Ovary (tissue), 10 donors: ENCODE measurements at regions of chr4 and their contacts with region 1.

Region 1: GRCh38 chr4:184168406-184169019 is 49.2 kb downstream of the ENPP6 start:
- DNase-seq: peak; percentile 80 to 92 (median 89)
- H3K4me3 ChIP-seq: no peak overlapping the region
- H3K27ac ChIP-seq: peak overlapping the region; percentile 77 to 88
- H3K4me1 ChIP-seq: peaks cover 2% of the 10 kb centered on the region
- H3K27me3 ChIP-seq: no peaks in the 10 kb centered on the region
- CTCF ChIP-seq: peak; percentile 93 to 99 (median 95)
- EP300 ChIP-seq: no peak
- POLR2A ChIP-seq: peak; percentile 13

Region 2: DNA sequence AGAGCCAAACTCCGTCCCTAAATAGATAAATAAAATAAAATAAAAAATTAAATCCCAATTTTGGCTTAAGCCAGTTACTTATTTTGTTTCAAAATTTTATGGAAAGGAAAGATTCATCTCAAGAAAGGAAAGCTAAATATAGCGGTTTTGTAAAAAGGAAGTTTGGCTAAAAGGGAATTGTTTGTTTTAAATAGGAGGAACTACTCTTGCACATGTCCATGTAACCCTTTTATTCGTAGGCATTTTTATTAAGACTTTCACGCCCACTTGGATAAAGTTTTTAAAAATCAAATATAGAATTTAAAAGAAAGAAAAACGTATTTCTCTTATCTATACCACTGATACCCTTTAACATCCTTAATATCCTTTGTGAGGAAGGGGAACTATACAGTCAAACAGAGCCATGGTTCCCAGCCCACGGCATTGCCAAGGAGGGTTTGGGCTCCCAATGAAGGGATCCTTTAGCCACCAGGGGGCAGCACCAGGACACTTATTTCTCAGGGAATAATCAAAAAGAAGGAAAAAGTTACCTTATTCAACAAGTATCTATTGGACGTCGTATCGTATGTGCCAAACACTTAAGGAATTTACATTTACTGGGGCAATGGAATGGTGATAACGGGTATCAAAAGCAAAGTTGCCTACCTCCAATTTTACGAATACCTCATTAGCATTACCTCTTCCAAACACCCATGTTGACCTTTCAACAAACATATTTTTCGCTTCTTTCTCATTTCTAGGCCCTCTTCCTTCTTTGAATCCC is 696.4 kb before region 1 on chr4:
- intact Hi-C with region 1: loop called in 1 of 4 experiments (anchors 10 kb)
- DNase-seq: peak; percentile 87 to 96 (median 91)
- H3K4me3 ChIP-seq: peak overlapping the region; percentile 4
- H3K27ac ChIP-seq: no peak overlapping the region
- H3K4me1 ChIP-seq: no peaks in the 10 kb centered on the region
- H3K27me3 ChIP-seq: no peaks in the 10 kb centered on the region
- CTCF ChIP-seq: peak; percentile 63 to 85 (median 82)
- EP300 ChIP-seq: no peak
- POLR2A ChIP-seq: no peak

Region 3: GRCh38 chr4:183840311-183840710 is 328.2 kb before region 1 on chr4:
- intact Hi-C with region 1: loop called (anchors 1 to 5 kb)
- DNase-seq: peak; percentile 72 to 90 (median 87)
- H3K4me3 ChIP-seq: no peak overlapping the region
- H3K27ac ChIP-seq: no peak overlapping the region
- H3K4me1 ChIP-seq: no peaks in the 10 kb centered on the region
- H3K27me3 ChIP-seq: no peaks in the 10 kb centered on the region
- CTCF ChIP-seq: peak; percentile 74 to 86 (median 84)
- EP300 ChIP-seq: no peak
- POLR2A ChIP-seq: no peak

Region 4: GRCh38 chr4:184028394-184029374 is 139.8 kb before region 1 on chr4:
- intact Hi-C with region 1: no loop called
- DNase-seq: no peak
- H3K4me3 ChIP-seq: no peak overlapping the region
- H3K27ac ChIP-seq: no peak overlapping the region
- H3K4me1 ChIP-seq: no peaks in the 10 kb centered on the region
- H3K27me3 ChIP-seq: no peaks in the 10 kb centered on the region
- CTCF ChIP-seq: no peak
- EP300 ChIP-seq: no peak
- POLR2A ChIP-seq: no peak

Region 5: GRCh38 chr4:184100297-184100885 is 68.1 kb before region 1 on chr4:
- intact Hi-C with region 1: loop called in 2 of 4 experiments (anchors 5 to 10 kb)
- DNase-seq: peak; percentile 20 to 79 (median 53)
- H3K4me3 ChIP-seq: no peak overlapping the region
- H3K27ac ChIP-seq: no peak overlapping the region
- H3K4me1 ChIP-seq: peaks cover 5% of the 10 kb centered on the region
- H3K27me3 ChIP-seq: no peaks in the 10 kb centered on the region
- CTCF ChIP-seq: peak in 2 of 3 donors; percentile 16 to 22
- EP300 ChIP-seq: no peak
- POLR2A ChIP-seq: no peak

Region 6: DNA sequence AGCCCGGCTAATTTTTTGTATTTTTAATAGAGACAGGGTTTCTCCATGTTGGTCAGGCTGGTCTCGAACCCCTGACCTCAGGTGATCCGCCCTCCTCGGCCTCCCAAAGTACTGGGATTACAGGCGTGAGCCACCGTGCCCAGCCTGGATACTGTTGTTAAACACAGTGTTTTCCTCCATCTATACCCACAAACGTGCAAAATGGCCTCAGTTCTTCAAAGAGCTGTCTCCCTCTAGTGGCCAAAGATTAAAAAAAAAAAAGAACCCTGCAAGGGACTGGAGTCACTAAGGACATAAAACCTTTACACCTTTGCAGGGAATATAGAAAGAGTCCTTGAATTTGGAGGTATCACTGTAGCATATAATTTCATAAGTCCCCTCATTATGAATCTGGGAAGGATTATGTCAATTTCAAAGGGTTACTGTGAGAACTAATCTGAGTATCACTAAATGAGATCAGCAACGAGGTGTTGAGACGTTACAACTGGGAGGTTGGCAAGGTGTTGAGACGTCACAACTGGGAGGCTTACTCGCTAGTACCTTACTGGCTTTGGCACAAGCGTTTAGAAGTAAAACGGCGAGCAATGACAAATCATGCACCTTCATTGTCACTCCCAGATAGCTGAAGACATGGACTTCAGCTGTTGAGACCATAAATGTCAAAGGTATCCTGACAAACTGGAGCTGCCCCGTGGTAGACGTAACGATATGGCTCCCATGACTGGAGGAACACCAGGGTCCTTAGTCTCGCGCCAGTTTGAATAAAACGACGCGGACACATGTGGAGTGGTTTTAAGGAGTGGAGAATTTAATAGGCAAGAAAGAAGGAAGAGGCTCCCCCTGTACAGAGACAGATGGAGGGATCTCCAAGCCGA is 82.5 kb after region 1 on chr4:
- intact Hi-C with region 1: loop called in 1 of 4 experiments (anchors 5 kb)
- DNase-seq: no peak
- H3K4me3 ChIP-seq: no peak overlapping the region
- H3K27ac ChIP-seq: no peak overlapping the region
- H3K4me1 ChIP-seq: no peaks in the 10 kb centered on the region
- H3K27me3 ChIP-seq: no peaks in the 10 kb centered on the region
- CTCF ChIP-seq: peak; percentile 17 to 50 (median 21)
- EP300 ChIP-seq: no peak
- POLR2A ChIP-seq: no peak